ENCODE measurements at regions of chr11 and their contacts with region 1.

Region 1: GRCh38 chr11:43837879-43838278 is 42.8 kb upstream of the ALKBH3 start:
- DNase-seq: no peak
- CTCF ChIP-seq: no peak

Region 2: DNA sequence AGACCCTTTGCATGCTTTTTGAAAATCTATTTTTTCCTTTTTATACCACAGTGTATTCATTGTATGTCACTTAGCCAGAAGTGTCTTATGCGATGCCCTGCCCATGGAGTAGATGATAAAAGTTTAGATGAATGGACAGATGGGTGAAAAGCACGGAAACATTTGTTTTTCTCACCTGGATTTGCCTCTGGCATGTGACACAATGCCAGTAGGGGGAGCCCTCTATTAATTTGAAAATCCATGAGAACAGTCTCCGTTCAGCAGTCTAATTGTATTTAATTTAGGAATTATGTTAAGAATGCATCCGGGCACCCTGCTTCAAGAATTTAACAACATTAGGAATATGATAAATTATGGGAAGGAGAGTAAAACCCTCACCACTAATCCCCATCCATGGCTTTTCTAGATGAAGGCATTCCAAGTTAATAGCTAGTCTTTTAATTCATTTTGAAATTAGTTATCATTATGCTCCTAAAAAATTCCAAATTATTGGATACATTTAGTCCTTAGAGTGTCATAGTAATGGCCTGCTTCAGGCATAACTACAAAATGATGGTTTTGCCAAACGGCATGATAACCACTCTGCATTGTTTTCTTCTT is 12.6 kb before region 1 on chr11:
- CTCF ChIA-PET with region 1: interaction called, 12 read pairs
- POLR2A ChIA-PET with region 1: no interaction called
- DNase-seq: no peak
- CTCF ChIP-seq: peak; percentile 43

Region 3: DNA sequence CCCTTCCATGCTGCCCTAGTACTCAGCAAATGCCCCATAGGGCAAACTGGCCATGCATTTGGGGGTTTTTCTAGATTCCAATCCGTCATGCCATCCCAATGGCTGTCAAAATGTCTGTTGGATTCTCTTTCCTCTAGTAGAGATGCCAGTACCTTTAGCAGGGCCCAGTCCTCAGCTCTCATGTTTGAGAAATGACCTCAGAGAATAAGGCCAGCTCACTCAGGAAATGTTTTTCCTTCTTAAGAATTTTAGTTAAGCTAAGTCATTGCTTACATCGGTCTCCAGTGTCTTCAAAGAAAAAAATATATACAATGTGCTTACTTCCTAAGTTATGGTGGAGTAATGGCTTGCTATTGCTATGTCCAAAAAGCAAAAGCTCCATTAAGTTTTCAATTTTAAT is 28.6 kb after region 1 on chr11:
- CTCF ChIA-PET with region 1: no interaction called
- POLR2A ChIA-PET with region 1: no interaction called
- DNase-seq: no peak
- CTCF ChIP-seq: no peak

Region 4: GRCh38 chr11:43898574-43898973 is 60.7 kb after region 1 on chr11:
- CTCF ChIA-PET with region 1: no interaction called
- POLR2A ChIA-PET with region 1: no interaction called
- DNase-seq: no peak
- CTCF ChIP-seq: no peak

Measured in GM10248 (cell line).